ENCODE measurements at regions of chr10 and their contacts with region 1.

Region 1: DNA sequence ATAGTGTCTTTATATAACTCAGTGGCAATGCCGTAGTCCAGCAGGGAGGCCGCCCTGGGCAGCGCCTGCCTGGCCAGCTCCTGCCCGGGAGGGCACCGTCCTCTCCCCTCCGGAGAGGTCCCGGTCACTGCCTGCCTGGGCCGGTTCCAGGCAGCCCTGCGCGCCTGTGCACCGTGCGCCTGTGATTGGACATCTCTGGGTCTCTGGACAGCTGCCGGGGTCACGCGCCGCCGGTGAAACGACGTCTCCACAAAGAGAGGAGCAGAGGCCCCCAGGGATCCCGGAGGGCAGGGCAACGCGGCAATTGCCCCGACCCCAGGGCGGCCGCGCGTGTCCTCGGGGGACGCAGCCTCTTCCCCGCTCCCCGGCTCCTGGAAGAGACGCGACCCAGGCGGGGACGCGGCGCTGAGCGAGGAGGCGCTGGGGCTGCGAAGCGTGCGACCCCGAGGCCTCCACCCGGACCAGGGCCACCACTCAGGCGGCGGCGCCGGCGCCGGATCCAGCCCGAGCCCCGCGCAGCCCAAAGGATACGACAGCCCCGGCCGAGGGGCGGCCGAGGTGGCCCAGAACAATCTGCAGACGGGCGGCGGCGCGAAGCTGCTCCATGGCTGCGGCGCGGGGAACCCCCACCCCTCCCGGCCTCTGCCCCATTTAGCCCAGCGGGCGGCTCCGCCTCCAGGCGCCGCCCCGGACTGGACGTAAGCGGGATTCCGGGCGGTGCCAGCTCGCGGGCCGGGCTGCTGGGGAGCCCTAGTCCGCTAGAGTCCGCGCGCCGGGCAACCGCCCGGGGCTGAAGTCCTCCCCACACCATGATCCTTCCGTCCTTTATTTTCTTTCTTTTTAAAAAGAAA is at the start of gene PHYH:
- DNase-seq: peak; percentile 81
- ATAC-seq: peak; percentile 77
- H3K4me3 Mint-ChIP-seq: peak within 1 kb of the TSS; percentile 81
- H3K27ac Mint-ChIP-seq: peak within 1 kb of the TSS; percentile 90
- H3K4me1 Mint-ChIP-seq: peaks cover 24% of the 10 kb centered on the region
- H3K27me3 Mint-ChIP-seq: no peaks in the 10 kb centered on the region
- total RNA-seq, gene PHYH: 11.5 to 12.7 TPM

Region 2: DNA sequence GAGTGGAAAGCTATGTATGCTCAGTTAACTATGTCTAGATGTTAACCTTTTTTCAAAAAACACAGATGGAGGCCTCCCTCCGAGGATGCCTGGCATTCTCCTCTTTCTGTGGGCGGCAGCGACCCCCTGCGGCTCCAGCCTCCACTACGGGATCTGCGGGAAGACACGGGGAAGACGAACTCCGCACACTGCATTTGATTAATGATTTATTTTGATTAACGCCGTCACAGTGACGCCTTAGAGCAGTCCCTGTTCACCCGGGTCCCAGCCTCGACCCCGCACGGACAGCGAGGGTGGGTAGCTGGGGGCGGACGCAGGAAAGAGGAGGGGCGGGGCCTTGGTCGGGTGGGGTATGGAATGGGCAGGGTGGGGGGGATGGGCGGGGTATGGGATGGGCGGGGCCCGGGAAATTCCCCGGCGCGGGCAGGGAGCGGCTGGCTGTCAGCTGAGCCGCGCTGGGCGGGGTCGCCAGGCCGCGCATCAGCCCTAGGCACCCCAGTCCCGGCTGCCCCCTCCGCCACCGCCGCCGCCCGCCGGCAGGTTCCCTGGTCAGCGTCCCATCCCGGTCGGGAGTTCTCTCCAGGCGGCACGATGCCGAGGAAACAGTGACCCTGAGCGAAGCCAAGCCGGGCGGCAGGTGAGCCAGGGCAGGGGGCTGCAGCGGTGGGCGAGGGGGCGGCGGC is 199.9 kb before region 1 on chr10 and contains the start of gene OPTN:
- CTCF ChIA-PET with region 1: interaction called, 8 read pairs
- POLR2A ChIA-PET with region 1: interaction called, 13 read pairs
- DNase-seq: peak; percentile 79
- ATAC-seq: peak; percentile 80
- H3K4me3 Mint-ChIP-seq: peak within 1 kb of the TSS; percentile 86
- H3K27ac Mint-ChIP-seq: peak within 1 kb of the TSS; percentile 91
- H3K4me1 Mint-ChIP-seq: peaks cover 41% of the 10 kb centered on the region
- H3K27me3 Mint-ChIP-seq: no peaks in the 10 kb centered on the region
- total RNA-seq, gene OPTN: 72.4 to 73.8 TPM

Region 3: GRCh38 chr10:13160934-13161856 is 138.5 kb before region 1 on chr10 and contains the start of gene MCM10:
- CTCF ChIA-PET with region 1: interaction called, 29 read pairs
- POLR2A ChIA-PET with region 1: interaction called, 17 read pairs
- DNase-seq: peak; percentile 99
- ATAC-seq: peak; percentile 100
- H3K4me3 Mint-ChIP-seq: peak within 1 kb of the TSS; percentile 91
- H3K27ac Mint-ChIP-seq: peak within 1 kb of the TSS; percentile 86
- H3K4me1 Mint-ChIP-seq: peaks cover 47% of the 10 kb centered on the region
- H3K27me3 Mint-ChIP-seq: no peaks in the 10 kb centered on the region
- total RNA-seq, gene MCM10: 68.3 to 73.5 TPM

Region 4: GRCh38 chr10:13206546-13207443 is 92.9 kb before region 1 on chr10:
- CTCF ChIA-PET with region 1: interaction called, 14 read pairs
- POLR2A ChIA-PET with region 1: no interaction called
- DNase-seq: peak; percentile 24
- ATAC-seq: no peak
- H3K4me3 Mint-ChIP-seq: no peak overlapping the region
- H3K27ac Mint-ChIP-seq: no peak overlapping the region
- H3K4me1 Mint-ChIP-seq: no peaks in the 10 kb centered on the region
- H3K27me3 Mint-ChIP-seq: no peaks in the 10 kb centered on the region

Region 5: DNA sequence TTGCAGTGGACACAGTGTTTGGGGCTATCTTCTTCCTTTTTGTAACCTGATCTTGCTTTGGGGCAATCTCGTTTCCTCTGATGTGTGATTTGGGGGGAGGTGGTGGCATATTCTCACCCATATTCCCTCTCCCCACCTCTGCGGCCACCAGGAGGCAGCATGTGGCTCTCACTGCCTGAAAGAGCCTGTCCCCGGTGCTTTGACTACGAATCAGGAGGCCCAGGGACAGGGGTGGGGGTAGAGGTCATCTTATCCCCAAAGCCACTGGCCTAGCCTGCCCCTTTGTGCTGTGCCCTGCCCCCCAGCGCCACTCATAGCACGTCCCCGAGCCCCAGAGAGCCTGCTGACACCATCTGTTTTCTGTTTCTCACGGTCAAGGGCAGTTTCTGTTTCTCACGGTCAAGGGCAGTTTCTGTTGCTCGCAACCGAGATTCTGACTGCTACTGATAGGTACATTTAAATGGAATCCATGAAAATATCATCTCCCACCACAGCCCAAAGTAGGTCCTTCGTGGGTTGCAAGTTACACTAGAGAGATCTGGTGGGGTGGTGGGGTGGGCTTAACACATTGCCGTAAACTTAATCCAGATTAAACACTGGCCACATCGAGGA is 28.0 kb before region 1 on chr10:
- CTCF ChIA-PET with region 1: interaction called, 17 read pairs
- POLR2A ChIA-PET with region 1: interaction called, 3 read pairs
- DNase-seq: peak; percentile 62
- ATAC-seq: peak; percentile 76
- H3K4me3 Mint-ChIP-seq: no peak overlapping the region
- H3K27ac Mint-ChIP-seq: no peak overlapping the region
- H3K4me1 Mint-ChIP-seq: peaks cover 10% of the 10 kb centered on the region
- H3K27me3 Mint-ChIP-seq: peaks cover 2% of the 10 kb centered on the region

Region 6: DNA sequence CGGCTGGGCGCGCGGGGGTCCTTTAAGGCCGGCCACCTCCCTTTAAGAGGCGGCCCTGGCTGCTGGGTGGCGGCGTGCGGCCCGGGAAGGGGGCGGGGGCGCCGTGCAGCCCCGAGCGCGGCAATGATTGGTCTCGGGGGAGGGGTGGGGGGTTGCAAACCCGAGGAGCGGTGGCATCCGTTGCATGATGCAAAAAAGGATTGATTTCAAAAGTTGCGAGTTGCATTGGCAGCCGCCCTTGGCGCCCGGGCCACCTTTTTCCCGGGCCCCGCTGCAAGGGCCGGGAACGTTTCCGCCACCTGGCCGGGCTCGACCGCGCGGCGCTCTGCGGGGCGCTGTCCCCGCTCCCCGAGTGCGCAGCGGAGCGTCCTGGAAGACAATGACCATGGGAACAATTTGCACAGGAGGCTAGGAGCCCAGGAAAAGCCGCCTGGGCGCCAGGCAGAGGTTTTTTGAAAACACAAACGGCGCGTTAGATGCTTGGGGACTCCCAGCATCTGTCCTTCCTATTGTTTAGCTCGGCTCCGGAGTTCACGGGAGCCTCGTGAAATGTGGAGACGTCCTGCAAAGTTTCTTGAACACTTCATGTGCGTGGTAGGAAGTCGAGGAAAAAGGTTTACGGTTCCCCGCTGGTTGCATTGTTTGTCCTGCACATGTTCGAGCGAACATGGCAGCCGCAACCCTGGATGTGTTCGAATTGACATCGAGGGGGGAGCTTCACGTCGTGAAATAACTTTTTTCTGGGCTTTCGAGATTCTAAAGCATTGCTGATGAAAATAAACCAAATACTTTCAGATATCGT is 48.8 kb after region 1 on chr10 and contains the start of gene SEPHS1:
- CTCF ChIA-PET with region 1: interaction called, 41 read pairs
- POLR2A ChIA-PET with region 1: interaction called, 21 read pairs
- DNase-seq: peak; percentile 86
- ATAC-seq: peak; percentile 76
- H3K4me3 Mint-ChIP-seq: peak within 1 kb of the TSS; percentile 92
- H3K27ac Mint-ChIP-seq: peak within 1 kb of the TSS; percentile 96
- H3K4me1 Mint-ChIP-seq: peaks cover 60% of the 10 kb centered on the region
- H3K27me3 Mint-ChIP-seq: no peaks in the 10 kb centered on the region
- total RNA-seq, gene SEPHS1: 63.5 to 64.0 TPM

Region 7: DNA sequence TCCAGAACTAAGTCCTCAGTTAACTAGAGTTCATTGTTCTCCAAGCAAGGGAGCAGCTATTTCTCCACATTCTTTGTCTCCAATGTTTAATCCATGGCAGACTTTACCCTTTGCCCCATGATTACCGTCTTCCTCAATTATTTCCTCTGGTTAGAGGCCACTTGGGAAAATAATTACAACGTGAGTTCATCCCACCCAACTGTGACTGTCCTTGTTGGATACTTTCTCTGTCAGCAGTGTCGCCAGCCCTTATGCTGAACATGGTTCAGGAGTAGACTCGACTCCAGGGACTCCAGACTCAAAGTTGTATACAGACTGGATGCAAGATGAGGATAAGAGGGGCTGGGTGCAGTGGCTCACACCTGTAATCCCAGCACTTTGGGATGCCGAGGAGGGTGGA is 65.6 kb after region 1 on chr10:
- CTCF ChIA-PET with region 1: no interaction called
- POLR2A ChIA-PET with region 1: no interaction called
- DNase-seq: no peak
- ATAC-seq: no peak
- H3K4me3 Mint-ChIP-seq: no peak overlapping the region
- H3K27ac Mint-ChIP-seq: no peak overlapping the region
- H3K4me1 Mint-ChIP-seq: no peaks in the 10 kb centered on the region
- H3K27me3 Mint-ChIP-seq: no peaks in the 10 kb centered on the region